Activated T-helper 2 cell treated with anti-CD3 and anti-CD28 coated beads, Interferon-gamma antibody, Interleukin-2, Interleukin-4, amounts not matched to agents 10 μg/mL and 5 μg/mL and 100 μg/mL, durations not matched to agents 14 hours and 24 hours and 36 hours (primary cell): ENCODE measurements at regions of chr7 and their contacts with region 1.

Region 1: DNA sequence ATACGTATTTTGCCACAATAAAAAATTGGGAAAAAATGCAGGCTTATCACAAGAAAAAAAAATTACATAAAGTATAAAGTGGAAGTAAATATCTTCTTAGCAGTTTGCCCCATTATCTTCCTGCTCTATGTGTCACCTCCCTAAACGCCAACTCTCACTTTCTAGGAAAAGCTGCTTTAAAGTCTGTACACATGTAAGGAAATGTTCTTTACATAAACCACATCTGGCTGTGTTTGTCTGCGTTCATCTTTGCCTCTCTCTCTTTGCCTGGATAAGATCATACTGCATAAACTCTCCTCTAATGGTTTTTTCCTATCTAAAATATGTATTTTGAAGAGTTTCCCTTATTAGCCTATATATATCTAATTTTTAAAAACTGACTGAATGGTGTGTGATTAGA is 23.0 kb upstream of the UMAD1 start:
- DNase-seq: no peak
- H3K4me3 Mint-ChIP-seq: no peak overlapping the region
- H3K27ac Mint-ChIP-seq: no peak overlapping the region
- H3K4me1 Mint-ChIP-seq: peaks cover 5% of the 10 kb centered on the region
- H3K27me3 Mint-ChIP-seq: peaks cover 7% of the 10 kb centered on the region

Region 2: GRCh38 chr7:6306471-6306870 is 1311.1 kb before region 1 on chr7:
- intact Hi-C with region 1: no loop called
- DNase-seq: no peak
- H3K4me3 Mint-ChIP-seq: no peak overlapping the region
- H3K27ac Mint-ChIP-seq: no peak overlapping the region
- H3K4me1 Mint-ChIP-seq: no peaks in the 10 kb centered on the region
- H3K27me3 Mint-ChIP-seq: peaks cover 5% of the 10 kb centered on the region

Region 3: GRCh38 chr7:7201578-7202374 is 415.8 kb before region 1 on chr7:
- intact Hi-C with region 1: no loop called
- DNase-seq: peak; percentile 25
- H3K4me3 Mint-ChIP-seq: peak overlapping the region; percentile 51
- H3K27ac Mint-ChIP-seq: peak overlapping the region; percentile 63
- H3K4me1 Mint-ChIP-seq: peaks cover 64% of the 10 kb centered on the region
- H3K27me3 Mint-ChIP-seq: no peaks in the 10 kb centered on the region

Region 4: DNA sequence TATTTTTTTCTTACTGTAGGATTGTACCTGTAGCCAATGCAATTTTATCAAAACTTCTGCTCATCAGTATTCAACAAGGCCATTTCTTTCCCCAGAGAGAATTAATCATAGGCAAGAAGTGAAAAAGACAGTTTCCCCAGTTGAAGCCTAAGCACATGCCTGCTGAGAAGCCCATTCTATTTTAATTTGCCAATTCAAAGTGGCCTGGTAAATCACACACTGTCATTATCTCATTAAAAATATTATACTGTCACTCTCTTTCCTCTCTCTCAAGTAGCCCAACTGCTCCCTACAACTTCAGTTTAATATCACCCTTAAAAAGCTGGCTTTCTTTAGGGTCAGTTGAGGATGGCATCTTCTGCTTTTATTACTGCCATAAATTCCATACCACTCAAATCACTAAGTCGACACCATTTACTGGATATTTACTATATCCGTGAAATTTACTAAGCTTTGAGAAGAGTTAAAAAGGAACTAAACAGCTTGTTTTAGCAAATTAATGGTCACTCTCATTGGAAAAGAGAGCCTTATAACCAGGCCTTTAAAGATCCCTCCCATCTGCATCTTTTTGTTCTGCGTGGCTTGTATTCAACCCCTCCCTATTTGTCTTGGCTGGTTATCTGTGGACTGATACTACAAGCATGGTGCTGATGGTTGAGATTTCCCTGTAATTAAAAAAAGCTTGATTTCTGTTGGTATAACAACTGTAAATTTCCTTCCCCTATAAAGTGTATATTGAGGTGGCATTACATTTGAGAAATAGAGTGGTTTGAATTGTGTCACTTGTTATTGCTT is 112.4 kb before region 1 on chr7:
- intact Hi-C with region 1: no loop called
- DNase-seq: no peak
- H3K4me3 Mint-ChIP-seq: no peak overlapping the region
- H3K27ac Mint-ChIP-seq: no peak overlapping the region
- H3K4me1 Mint-ChIP-seq: no peaks in the 10 kb centered on the region
- H3K27me3 Mint-ChIP-seq: peaks cover 9% of the 10 kb centered on the region

Region 5: DNA sequence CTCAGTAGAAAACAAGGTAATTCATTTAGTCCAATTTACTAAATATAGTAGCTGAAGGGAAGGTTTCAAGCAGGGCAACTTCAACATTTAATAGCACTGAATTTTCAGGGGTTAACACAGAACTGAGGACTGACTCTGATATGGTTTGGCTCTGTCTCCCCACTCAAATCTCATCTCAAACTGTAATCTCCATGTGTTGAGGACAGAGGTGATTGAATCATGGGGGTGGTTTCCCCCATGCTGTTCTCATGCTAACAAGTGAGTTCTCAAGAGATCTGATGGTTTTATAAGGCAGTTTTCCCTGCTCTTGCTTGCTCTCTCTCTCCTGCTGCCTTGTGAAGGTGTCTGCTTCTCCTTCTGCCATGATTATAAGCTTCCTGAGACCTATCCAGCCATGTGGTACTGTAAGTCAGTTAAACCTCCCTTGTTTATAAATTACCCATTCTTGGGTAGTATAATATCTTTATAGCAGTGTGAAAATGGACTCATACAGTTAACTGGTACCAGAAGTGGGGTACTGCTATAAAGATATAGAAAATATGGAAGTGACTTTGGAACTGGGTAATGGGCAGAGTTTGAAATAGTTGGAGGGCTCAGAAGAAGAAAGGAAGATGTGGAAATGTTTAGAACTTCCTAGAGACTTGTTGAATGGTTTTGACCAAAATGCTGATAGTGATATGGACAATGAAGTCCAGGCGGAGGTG is 13.2 kb after region 1 on chr7:
- intact Hi-C with region 1: loop called (anchors 2 kb)
- DNase-seq: no peak
- H3K4me3 Mint-ChIP-seq: no peak overlapping the region
- H3K27ac Mint-ChIP-seq: no peak overlapping the region
- H3K4me1 Mint-ChIP-seq: peaks cover 7% of the 10 kb centered on the region
- H3K27me3 Mint-ChIP-seq: no peaks in the 10 kb centered on the region

Region 6: DNA sequence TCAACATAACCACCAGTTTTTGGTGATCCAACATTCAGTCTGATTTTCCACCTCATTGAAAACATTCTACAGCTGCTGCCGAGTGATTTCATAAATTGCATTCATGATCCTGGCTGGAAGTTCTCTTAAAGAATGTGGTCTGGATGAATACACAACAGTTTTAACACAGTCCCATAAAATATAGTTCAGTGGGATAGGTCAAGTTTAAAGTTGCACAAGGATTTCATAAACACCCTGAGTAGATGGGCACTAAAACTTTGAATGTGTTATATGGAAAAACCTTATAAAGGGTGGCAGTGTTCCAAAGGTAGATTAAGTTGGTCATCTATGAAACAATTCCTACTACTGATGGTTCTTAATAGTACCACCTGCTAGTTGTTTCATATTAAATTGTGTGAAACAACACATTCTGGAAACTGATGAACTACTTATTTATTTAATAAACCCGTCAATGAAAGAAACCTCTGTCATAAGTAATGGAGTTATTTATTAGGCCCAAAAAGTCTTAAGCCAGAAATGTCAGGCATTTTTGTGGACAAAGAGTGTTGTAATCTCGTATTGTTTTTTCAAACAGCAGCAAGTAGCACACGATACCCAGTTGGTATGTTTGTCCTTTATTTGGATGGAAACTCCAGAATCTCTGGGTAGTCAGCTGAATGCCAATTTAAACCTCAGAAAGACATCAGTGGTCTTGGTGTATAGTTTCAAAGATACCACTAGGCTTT is 115.2 kb after region 1 on chr7:
- intact Hi-C with region 1: no loop called
- DNase-seq: no peak
- H3K4me3 Mint-ChIP-seq: no peak overlapping the region
- H3K27ac Mint-ChIP-seq: no peak overlapping the region
- H3K4me1 Mint-ChIP-seq: no peaks in the 10 kb centered on the region
- H3K27me3 Mint-ChIP-seq: no peaks in the 10 kb centered on the region